ENCODE measurements at regions of chr19 and their contacts with region 1.

Region 1: DNA sequence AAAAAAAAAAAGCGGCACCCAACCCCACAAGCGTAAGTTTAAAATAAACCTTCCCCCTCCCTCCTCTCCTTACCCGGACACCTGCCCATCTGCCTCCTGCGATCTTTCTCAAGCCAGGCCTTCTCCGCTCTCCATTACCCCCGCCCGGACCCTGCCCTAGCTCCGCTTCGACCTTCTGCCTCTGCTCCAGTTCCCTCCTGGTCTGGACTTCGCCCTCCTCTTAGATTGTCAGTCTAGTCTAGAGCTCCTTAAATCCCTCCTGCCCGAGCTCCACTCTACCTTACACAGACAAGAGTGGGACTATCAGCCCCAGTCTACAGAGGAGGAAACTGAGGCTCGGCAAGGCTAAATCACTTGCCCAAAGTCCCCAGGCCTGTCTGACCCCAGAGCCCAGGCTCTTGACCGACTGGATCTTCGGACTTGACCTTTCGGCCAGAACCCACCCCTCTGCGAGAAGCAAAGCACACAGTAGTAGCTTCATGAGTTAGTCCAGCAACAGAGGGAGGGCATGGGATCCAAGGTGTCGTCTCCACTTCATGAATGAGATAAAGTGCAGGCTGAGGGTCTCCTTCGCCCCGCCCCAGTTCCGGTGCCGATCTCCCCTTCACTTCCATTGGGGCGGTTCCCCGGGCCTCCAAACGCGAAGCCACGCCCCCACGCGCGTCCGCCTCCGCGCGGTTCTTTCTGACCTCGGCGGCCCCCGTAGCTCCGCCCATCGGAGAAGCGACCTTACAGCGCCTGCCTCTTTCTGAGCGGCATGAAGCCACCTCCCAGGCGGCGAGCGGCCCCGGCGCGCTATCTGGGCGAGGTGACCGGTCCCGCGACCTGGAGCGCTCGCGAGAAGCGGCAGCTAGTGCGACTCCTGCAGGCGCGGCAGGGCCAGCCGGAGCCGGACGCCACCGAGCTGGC is at the start of gene SNAPC2:
- DNase-seq: peak; percentile 81 to 98
- H3K4me3 ChIP-seq: peak within 1 kb of the TSS; percentile 96 to 97
- H3K27ac ChIP-seq: peak within 1 kb of the TSS; percentile 90 to 93
- H3K4me1 ChIP-seq: peaks cover 37 to 39% of the 10 kb centered on the region in 2 donors
- H3K27me3 ChIP-seq: peaks cover 13% of the 10 kb centered on the region
- CTCF ChIP-seq: peak in 1 of 3 experiments; percentile 5
- total RNA-seq, gene SNAPC2: 30.5 TPM

Region 2: GRCh38 chr19:7903244-7904073 is 16.4 kb before region 1 on chr19 and contains the start of gene MAP2K7:
- intact Hi-C with region 1: loop called (anchors 1 kb)
- DNase-seq: peak; percentile 97 to 100
- H3K4me3 ChIP-seq: peak within 1 kb of the TSS; percentile 75 to 97
- H3K27ac ChIP-seq: peak within 1 kb of the TSS; percentile 77 to 81
- H3K4me1 ChIP-seq: peaks cover 5 to 22% of the 10 kb centered on the region in 2 donors
- H3K27me3 ChIP-seq: no peaks in the 10 kb centered on the region
- CTCF ChIP-seq: peak in 2 of 3 experiments; percentile 55 to 64
- total RNA-seq, gene MAP2K7: 37.3 TPM

Region 3: GRCh38 chr19:7970716-7971448 is 51.0 kb after region 1 on chr19:
- intact Hi-C with region 1: no loop called
- DNase-seq: no peak
- H3K4me3 ChIP-seq: no peak overlapping the region
- H3K27ac ChIP-seq: no peak overlapping the region
- H3K4me1 ChIP-seq: peaks cover 0 to 3% of the 10 kb centered on the region in 2 donors
- H3K27me3 ChIP-seq: no peaks in the 10 kb centered on the region
- CTCF ChIP-seq: peak; percentile 13 to 54 (median 34)

Region 4: DNA sequence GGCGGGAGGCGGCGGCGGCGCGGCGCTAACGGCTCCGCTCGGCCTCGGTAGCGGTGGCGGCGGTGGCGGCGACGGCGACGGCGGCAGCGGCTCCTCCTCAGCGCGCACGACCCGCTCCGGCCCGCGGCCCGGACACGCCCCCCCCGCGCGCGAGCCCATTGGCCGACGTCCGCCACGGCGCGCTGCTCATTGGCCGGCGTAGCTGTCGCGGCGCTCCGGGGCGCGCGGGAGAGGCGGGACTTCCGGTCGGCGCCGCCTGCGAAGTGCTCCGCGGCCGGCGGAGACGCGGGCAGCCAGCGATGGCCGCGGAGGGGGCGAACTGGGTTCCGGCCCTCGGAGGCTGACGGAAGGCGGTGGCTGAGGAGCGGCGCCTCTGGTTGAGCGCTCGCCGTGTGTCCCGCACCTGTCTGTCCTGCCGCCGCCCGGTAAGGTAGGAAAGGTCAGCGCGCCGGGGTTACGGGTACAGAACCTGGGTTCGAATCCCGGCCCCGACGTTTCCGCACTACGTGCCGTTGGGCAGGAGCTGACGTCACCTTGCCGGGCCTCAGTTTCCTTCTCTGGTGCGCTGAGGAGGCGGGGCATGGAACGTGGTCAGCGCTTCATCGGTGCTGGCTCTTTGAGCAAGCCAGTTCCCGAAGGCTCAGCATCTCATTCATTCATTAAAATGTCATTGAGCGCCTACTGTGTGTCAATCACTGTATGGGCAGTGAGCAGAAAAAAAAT is 85.8 kb after region 1 on chr19 and contains the start of gene ELAVL1:
- intact Hi-C with region 1: loop called (anchors 1 kb)
- DNase-seq: peak; percentile 45 to 92
- H3K4me3 ChIP-seq: peak within 1 kb of the TSS; percentile 87 to 98
- H3K27ac ChIP-seq: peak within 1 kb of the TSS; percentile 78 to 88
- H3K4me1 ChIP-seq: peaks cover 0 to 27% of the 10 kb centered on the region in 2 donors
- H3K27me3 ChIP-seq: no peaks in the 10 kb centered on the region
- CTCF ChIP-seq: no peak
- total RNA-seq, gene ELAVL1: 19.9 TPM

Region 5: GRCh38 chr19:8513687-8514504 is 594.0 kb after region 1 on chr19 and contains the start of gene ZNF414:
- intact Hi-C with region 1: loop called (anchors 10 kb)
- DNase-seq: peak; percentile 77 to 98
- H3K4me3 ChIP-seq: peak within 1 kb of the TSS; percentile 70 to 90
- H3K27ac ChIP-seq: peak within 1 kb of the TSS; percentile 96 to 98
- H3K4me1 ChIP-seq: peaks cover 6 to 7% of the 10 kb centered on the region in 2 donors
- H3K27me3 ChIP-seq: no peaks in the 10 kb centered on the region
- CTCF ChIP-seq: no peak
- total RNA-seq, gene ZNF414: 189 TPM

Region 6: DNA sequence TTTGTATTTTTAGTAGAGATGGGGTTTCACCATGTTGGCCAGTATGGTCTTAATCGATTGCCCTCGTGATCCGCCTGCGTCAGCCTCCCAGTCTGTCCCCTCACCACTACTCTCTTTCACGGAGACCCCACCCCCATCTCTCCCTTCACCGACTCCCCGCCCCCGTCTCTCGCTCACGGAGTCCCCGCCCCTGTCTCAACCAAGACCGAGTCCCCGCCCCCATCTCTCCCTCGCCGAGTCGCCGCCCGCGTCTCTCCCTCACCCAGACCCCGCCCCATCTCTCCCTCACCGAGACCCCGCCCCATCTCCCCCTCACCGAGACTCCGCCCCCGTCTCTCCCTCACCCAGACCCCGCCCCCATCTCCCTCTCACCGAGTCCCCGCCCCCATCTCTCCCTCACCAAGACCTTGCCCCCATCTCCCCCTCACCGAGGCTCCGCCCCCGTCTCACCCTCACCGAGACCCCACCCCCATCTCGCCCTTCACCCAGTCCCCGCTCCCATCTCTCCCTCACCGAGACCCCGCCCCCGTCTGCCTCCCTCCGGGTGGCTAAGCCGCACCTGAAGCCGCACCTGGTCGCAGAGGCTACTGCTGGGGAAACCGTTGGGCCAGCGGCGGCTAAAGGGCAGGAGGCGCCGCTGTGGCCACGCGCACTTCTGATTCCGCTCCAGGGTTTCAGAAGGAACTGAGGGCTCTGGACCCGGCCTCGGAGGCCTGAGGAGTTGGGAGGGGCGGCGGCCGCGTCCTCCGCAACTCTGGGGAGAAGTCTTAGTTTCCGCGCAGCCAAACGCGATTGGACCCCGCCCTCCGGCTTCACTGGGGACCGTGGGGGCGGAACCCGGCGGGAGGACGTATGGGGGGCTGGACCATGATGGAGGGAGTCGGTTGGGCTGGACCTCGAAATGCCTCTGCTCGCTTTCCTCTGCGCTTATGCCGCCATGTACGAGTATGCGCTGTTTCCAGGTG is 1865.8 kb after region 1 on chr19:
- intact Hi-C with region 1: loop called (anchors 10 kb)
- DNase-seq: peak; percentile 87 to 98
- H3K4me3 ChIP-seq: peak overlapping the region; percentile 74 to 78
- H3K27ac ChIP-seq: peak overlapping the region; percentile 98
- H3K4me1 ChIP-seq: peaks cover 0 to 6% of the 10 kb centered on the region in 2 donors
- H3K27me3 ChIP-seq: no peaks in the 10 kb centered on the region
- CTCF ChIP-seq: no peak

Measured in ascending aorta (tissue), 2 donors.